ENCODE measurements at regions of chr3 and their contacts with region 1.

Region 1: GRCh38 chr3:113575206-113575605 is 42.9 kb downstream of the SIDT1 start:
- DNase-seq: no peak
- ATAC-seq: no peak
- H3K4me3 ChIP-seq: no peak overlapping the region
- H3K4me3 Mint-ChIP-seq: no peak overlapping the region
- H3K27ac ChIP-seq: peak overlapping the region in 1 of 2 donors; percentile 46
- H3K27ac Mint-ChIP-seq: no peak overlapping the region
- H3K4me1 ChIP-seq: peaks cover 2 to 3% of the 10 kb centered on the region in 2 donors
- H3K4me1 Mint-ChIP-seq: peaks cover 4% of the 10 kb centered on the region
- H3K27me3 ChIP-seq: no peaks in the 10 kb centered on the region
- H3K27me3 Mint-ChIP-seq: no peaks in the 10 kb centered on the region
- CTCF ChIP-seq: no peak

Region 2: DNA sequence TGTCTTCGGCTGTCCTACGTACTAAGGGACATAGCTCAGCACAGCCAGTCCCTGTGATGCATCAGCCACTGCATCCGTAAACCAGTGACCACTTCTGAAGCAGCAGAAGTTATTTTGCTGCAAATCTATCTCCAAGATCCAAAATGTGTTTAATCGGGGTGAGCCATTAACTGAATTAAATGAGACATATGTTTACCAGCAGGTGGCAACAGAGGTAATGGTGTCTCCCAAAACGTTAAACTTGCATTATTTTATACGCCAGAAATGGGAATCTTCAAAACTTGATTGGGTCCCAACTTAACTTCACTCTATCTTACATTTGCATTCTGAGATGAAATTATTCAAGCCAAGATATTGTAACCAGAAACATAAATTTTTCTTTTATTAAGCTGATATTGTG is 439.1 kb before region 1 on chr3:
- CTCF ChIA-PET with region 1: no interaction called
- POLR2A ChIA-PET with region 1: no interaction called
- intact Hi-C with region 1: loop called (anchors 5 kb)
- DNase-seq: peak; percentile 20
- ATAC-seq: no peak
- H3K4me3 ChIP-seq: no peak overlapping the region
- H3K4me3 Mint-ChIP-seq: no peak overlapping the region
- H3K27ac ChIP-seq: no peak overlapping the region
- H3K27ac Mint-ChIP-seq: no peak overlapping the region
- H3K4me1 ChIP-seq: no peaks in the 10 kb centered on the region
- H3K4me1 Mint-ChIP-seq: no peaks in the 10 kb centered on the region
- H3K27me3 ChIP-seq: no peaks in the 10 kb centered on the region
- H3K27me3 Mint-ChIP-seq: no peaks in the 10 kb centered on the region
- CTCF ChIP-seq: peak; percentile 42

Region 3: GRCh38 chr3:113495035-113495434 is 80.2 kb before region 1 on chr3:
- CTCF ChIA-PET with region 1: interaction called, 238 read pairs
- POLR2A ChIA-PET with region 1: interaction called, 5 read pairs
- intact Hi-C with region 1: loop called (anchors 1 kb)
- DNase-seq: peak; percentile 60
- ATAC-seq: peak; percentile 47
- H3K4me3 ChIP-seq: no peak overlapping the region
- H3K4me3 Mint-ChIP-seq: no peak overlapping the region
- H3K27ac ChIP-seq: no peak overlapping the region
- H3K27ac Mint-ChIP-seq: no peak overlapping the region
- H3K4me1 ChIP-seq: no peaks in the 10 kb centered on the region
- H3K4me1 Mint-ChIP-seq: no peaks in the 10 kb centered on the region
- H3K27me3 ChIP-seq: no peaks in the 10 kb centered on the region
- H3K27me3 Mint-ChIP-seq: no peaks in the 10 kb centered on the region
- CTCF ChIP-seq: peak; percentile 57

Region 4: GRCh38 chr3:113514265-113514769 is 60.9 kb before region 1 on chr3:
- CTCF ChIA-PET with region 1: interaction called, 15 read pairs
- POLR2A ChIA-PET with region 1: interaction called, 3 read pairs
- intact Hi-C with region 1: no loop called
- DNase-seq: no peak
- ATAC-seq: no peak
- H3K4me3 ChIP-seq: peak overlapping the region; percentile 46 to 98 (median 92)
- H3K4me3 Mint-ChIP-seq: no peak overlapping the region
- H3K27ac ChIP-seq: peak overlapping the region; percentile 77 to 91
- H3K27ac Mint-ChIP-seq: no peak overlapping the region
- H3K4me1 ChIP-seq: peaks cover 12 to 17% of the 10 kb centered on the region in 2 donors
- H3K4me1 Mint-ChIP-seq: peaks cover 14% of the 10 kb centered on the region
- H3K27me3 ChIP-seq: peaks cover 0 to 14% (median 4%) of the 10 kb centered on the region in 4 experiments
- H3K27me3 Mint-ChIP-seq: peaks cover 23% of the 10 kb centered on the region
- CTCF ChIP-seq: no peak

Region 5: DNA sequence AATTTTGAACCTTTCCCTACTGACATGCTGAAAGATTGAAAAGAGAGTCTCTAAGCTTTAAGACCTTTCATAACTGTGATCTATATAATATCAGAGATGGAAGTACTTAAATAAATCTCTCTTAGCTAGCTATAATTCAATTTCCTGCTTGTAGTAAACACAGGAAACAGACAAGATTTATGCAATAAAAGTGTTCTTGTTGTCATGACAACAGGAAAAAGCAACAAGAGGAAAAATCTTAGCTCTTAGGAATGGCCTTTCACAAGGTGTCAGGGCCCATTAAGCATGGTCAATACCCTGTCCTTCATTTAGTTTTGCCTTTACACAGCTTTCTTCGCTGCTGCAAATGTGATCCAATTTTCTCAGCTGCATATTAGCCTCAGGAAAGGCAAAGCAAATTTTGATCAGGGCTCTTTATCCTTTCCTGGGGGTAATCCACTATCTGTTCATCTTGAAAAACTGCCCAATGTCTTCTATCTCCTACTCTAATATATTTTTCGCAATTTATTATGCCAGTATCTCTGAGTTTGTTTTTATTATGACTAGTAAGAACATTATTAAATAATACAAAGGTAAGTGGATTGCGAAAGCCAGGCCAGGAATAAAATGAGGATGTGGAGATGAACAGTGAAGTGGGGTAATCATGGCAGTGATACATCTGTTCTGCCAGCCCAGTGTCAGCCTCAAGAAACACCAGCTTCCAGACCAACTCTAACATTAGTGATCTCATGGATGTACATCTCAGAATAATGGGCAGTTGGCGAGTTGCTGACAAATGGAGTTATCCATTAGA is 14.2 kb before region 1 on chr3:
- CTCF ChIA-PET with region 1: interaction called, 11 read pairs
- POLR2A ChIA-PET with region 1: no interaction called
- intact Hi-C with region 1: no loop called
- DNase-seq: no peak
- ATAC-seq: no peak
- H3K4me3 ChIP-seq: no peak overlapping the region
- H3K4me3 Mint-ChIP-seq: no peak overlapping the region
- H3K27ac ChIP-seq: no peak overlapping the region
- H3K27ac Mint-ChIP-seq: no peak overlapping the region
- H3K4me1 ChIP-seq: peaks cover 3 to 10% of the 10 kb centered on the region in 2 donors
- H3K4me1 Mint-ChIP-seq: peaks cover 27% of the 10 kb centered on the region
- H3K27me3 ChIP-seq: no peaks in the 10 kb centered on the region
- H3K27me3 Mint-ChIP-seq: no peaks in the 10 kb centered on the region
- CTCF ChIP-seq: no peak

Region 6: GRCh38 chr3:113649174-113649845 is 74.1 kb after region 1 on chr3:
- CTCF ChIA-PET with region 1: no interaction called
- POLR2A ChIA-PET with region 1: no interaction called
- intact Hi-C with region 1: no loop called
- DNase-seq: no peak
- ATAC-seq: no peak
- H3K4me3 ChIP-seq: no peak overlapping the region
- H3K4me3 Mint-ChIP-seq: no peak overlapping the region
- H3K27ac ChIP-seq: no peak overlapping the region
- H3K27ac Mint-ChIP-seq: no peak overlapping the region
- H3K4me1 ChIP-seq: no peaks in the 10 kb centered on the region
- H3K4me1 Mint-ChIP-seq: peaks cover 21% of the 10 kb centered on the region
- H3K27me3 ChIP-seq: no peaks in the 10 kb centered on the region
- H3K27me3 Mint-ChIP-seq: no peaks in the 10 kb centered on the region
- CTCF ChIP-seq: no peak

Measured in B cell (primary cell).